K562 (cell line): ENCODE measurements at regions of chr6 and their contacts with region 1.

Region 1: DNA sequence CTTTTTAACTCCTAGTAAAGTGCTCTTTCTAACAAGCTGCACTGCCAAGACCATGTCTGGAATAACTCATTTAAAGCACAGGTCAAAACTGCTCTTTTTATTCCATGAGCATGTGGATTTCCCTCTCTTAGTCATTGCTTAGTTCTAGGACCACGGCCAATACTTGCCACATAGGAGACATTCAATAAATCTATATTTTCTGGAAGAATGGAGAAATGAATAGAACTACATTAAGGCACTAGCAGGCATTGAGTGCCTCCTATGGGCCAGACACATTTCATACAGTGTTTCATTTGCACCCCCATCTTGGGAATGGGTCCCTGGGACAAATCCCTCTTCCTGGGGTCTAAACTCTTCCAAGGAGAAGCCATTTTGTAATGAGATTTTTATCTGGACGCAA is 552.8 kb upstream of the CITED2 start:
- DNase-seq: peak in 3 of 4 experiments; percentile 22 to 37 (median 30)
- ATAC-seq: peak; percentile 81
- H3K4me3 ChIP-seq: no peak overlapping the region
- H3K27ac ChIP-seq: no peak overlapping the region
- H3K4me1 ChIP-seq: peaks cover 0 to 15% of the 10 kb centered on the region in 2 experiments; a peak in 3 of 5 replicates
- H3K27me3 ChIP-seq: no peaks in the 10 kb centered on the region
- CTCF ChIP-seq: peak; percentile 30 to 69 (median 55); a peak in 5 of 6 replicates
- EP300 ChIP-seq: no peak
- POLR2A ChIP-seq: no peak
- RAD21 ChIP-seq: peak; percentile 82 to 85

Region 2: DNA sequence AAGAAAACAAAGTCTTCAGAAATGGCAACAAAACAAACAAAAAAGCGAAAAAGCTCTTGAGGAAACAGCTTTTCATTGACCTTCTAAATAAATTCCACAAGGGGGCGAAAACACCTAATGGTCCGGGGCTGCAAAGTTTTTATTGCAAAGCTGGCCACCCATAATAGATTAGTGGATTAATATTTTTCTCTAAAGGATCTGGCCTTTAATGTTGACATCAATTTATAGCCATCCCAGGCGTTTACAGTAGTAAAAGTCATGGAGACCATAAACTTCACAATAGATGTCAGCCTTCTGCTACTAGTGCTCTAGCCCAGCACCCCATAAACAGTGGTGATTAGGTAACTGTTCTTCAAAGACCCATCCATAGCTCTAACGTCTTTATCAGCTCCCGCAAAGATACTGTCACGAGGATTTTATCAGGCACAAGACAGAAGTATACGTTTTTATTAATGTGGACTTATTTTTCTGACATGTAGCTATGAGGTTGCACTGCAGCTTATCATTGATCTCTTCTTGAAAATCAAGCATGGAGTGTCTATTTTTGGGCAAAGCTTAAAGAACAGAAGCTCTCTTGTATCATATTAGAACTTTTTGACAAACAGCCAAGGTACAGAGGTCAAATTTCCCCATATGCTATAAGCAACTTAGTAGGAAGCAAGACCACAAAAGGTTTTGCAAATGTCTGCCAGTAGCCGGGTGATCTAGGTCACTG is 557.5 kb before region 1 on chr6:
- CTCF ChIA-PET with region 1: no interaction called
- POLR2A ChIA-PET with region 1: interaction called, 3 read pairs
- in situ Hi-C with region 1: no loop called
- intact Hi-C with region 1: loop called (anchors 1 kb)
- DNase-seq: peak in 2 of 4 experiments; percentile 59 to 64
- ATAC-seq: no peak
- H3K4me3 ChIP-seq: no peak overlapping the region
- H3K27ac ChIP-seq: peak overlapping the region; percentile 5; the same call in 2 of the 3 replicates
- H3K4me1 ChIP-seq: peaks cover 18 to 24% of the 10 kb centered on the region in 2 experiments
- H3K27me3 ChIP-seq: no peaks in the 10 kb centered on the region
- CTCF ChIP-seq: peak; percentile 66 to 87 (median 76)
- EP300 ChIP-seq: no peak
- POLR2A ChIP-seq: no peak
- RAD21 ChIP-seq: peak; percentile 94 to 97

Region 3: GRCh38 chr6:139422105-139423036 is 504.9 kb before region 1 on chr6:
- CTCF ChIA-PET with region 1: no interaction called
- POLR2A ChIA-PET with region 1: no interaction called
- in situ Hi-C with region 1: no loop called
- intact Hi-C with region 1: no loop called
- DNase-seq: no peak
- ATAC-seq: peak; percentile 16; the same call in 1 of the 3 replicates
- H3K4me3 ChIP-seq: no peak overlapping the region
- H3K27ac ChIP-seq: no peak overlapping the region
- H3K4me1 ChIP-seq: peaks cover 3 to 20% of the 10 kb centered on the region in 2 experiments; a peak in 4 of 5 replicates
- H3K27me3 ChIP-seq: no peaks in the 10 kb centered on the region
- CTCF ChIP-seq: no peak
- EP300 ChIP-seq: no peak
- POLR2A ChIP-seq: no peak
- RAD21 ChIP-seq: no peak

Region 4: DNA sequence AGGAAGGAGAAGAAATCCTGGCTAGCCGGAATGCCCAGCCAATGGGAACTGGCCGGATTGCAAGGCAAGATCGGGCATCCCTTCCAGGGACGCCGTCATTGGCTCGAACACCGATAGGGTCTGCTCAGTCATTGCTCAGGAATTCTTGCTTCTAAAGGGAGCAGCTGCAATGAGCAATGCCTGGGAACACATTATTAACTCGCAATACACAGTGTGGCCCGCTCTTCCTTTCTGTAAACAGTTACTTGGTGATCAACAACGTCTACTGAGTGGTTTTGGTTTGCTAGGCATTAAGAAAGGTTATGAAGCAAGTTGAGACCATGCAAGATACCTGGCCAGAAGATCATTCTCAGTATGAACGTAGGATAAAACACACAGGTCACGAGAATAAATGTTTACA is 387.4 kb before region 1 on chr6:
- CTCF ChIA-PET with region 1: no interaction called
- POLR2A ChIA-PET with region 1: no interaction called
- in situ Hi-C with region 1: no loop called
- intact Hi-C with region 1: loop called (anchors 10 kb)
- DNase-seq: no peak
- ATAC-seq: no peak; the same call in 1 of the 3 replicates
- H3K4me3 ChIP-seq: no peak overlapping the region
- H3K27ac ChIP-seq: no peak overlapping the region
- H3K4me1 ChIP-seq: peaks cover 7 to 9% of the 10 kb centered on the region in 2 experiments; a peak in 4 of 5 replicates
- H3K27me3 ChIP-seq: no peaks in the 10 kb centered on the region
- CTCF ChIP-seq: no peak
- EP300 ChIP-seq: no peak
- POLR2A ChIP-seq: no peak
- RAD21 ChIP-seq: no peak

Region 5: GRCh38 chr6:139655790-139656687 is 271.2 kb before region 1 on chr6:
- CTCF ChIA-PET with region 1: no interaction called
- POLR2A ChIA-PET with region 1: no interaction called
- in situ Hi-C with region 1: no loop called
- intact Hi-C with region 1: loop called (anchors 5 kb)
- DNase-seq: peak in 3 of 4 experiments; percentile 32 to 36 (median 33)
- ATAC-seq: peak; percentile 81
- H3K4me3 ChIP-seq: no peak overlapping the region
- H3K27ac ChIP-seq: no peak overlapping the region
- H3K4me1 ChIP-seq: peaks cover under 1 to 5% of the 10 kb centered on the region in 2 experiments; a peak in 4 of 5 replicates
- H3K27me3 ChIP-seq: no peaks in the 10 kb centered on the region
- CTCF ChIP-seq: no peak
- EP300 ChIP-seq: no peak
- POLR2A ChIP-seq: no peak
- RAD21 ChIP-seq: no peak

Region 6: DNA sequence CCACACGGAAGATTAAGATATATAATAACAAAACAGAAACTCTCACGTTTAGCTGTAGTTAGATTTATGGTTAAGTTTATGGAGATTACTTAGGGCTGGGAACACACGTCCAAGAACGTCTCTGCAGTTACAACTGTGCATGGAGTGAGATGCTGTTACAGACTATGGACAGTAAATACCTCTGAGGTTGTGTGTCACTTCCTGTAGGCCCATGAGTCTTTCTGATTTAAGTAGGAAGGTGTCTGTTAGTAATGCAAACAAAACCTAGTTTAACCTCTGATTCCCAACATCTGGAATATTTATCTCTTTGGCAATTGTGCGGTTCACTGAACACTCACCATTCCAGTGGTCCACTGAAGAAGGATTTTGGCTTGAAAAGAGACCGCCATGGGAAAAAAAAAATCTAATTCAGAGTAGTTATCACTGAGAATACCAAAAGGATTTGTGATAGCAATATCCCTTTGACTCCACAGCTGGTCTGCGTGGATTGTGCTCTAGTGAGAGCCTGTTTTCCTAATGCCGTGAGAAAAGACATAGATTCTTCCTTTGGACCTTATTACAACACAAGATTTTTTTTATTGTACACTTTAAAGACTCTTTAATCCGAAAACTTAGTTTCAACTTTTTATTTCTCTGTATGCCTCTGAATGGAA is 74.6 kb before region 1 on chr6:
- CTCF ChIA-PET with region 1: no interaction called
- POLR2A ChIA-PET with region 1: no interaction called
- in situ Hi-C with region 1: no loop called
- intact Hi-C with region 1: no loop called
- DNase-seq: no peak
- ATAC-seq: peak; percentile 41; the same call in 1 of the 3 replicates
- H3K4me3 ChIP-seq: no peak overlapping the region
- H3K27ac ChIP-seq: no peak overlapping the region
- H3K4me1 ChIP-seq: no peaks in the 10 kb centered on the region
- H3K27me3 ChIP-seq: no peaks in the 10 kb centered on the region
- CTCF ChIP-seq: no peak
- EP300 ChIP-seq: no peak
- POLR2A ChIP-seq: no peak
- RAD21 ChIP-seq: no peak

Region 7: GRCh38 chr6:140264431-140264830 is 337.2 kb after region 1 on chr6:
- CTCF ChIA-PET with region 1: no interaction called
- POLR2A ChIA-PET with region 1: no interaction called
- in situ Hi-C with region 1: no loop called
- intact Hi-C with region 1: no loop called
- DNase-seq: no peak
- ATAC-seq: no peak
- H3K4me3 ChIP-seq: no peak overlapping the region
- H3K27ac ChIP-seq: no peak overlapping the region
- H3K4me1 ChIP-seq: no peaks in the 10 kb centered on the region
- H3K27me3 ChIP-seq: no peaks in the 10 kb centered on the region
- CTCF ChIP-seq: no peak
- EP300 ChIP-seq: no peak
- POLR2A ChIP-seq: no peak
- RAD21 ChIP-seq: no peak